Transverse colon (tissue), 4 donors: ENCODE measurements at regions of chr12 and their contacts with region 1.

Region 1: GRCh38 chr12:132373901-132374611 is 44.7 kb upstream of the GALNT9 start:
- DNase-seq: no peak
- H3K4me3 ChIP-seq: no peak overlapping the region
- H3K27ac ChIP-seq: no peak overlapping the region
- H3K4me1 ChIP-seq: no peaks in the 10 kb centered on the region
- H3K27me3 ChIP-seq: peaks cover 76% of the 10 kb centered on the region
- CTCF ChIP-seq: no peak
- EP300 ChIP-seq: no peak
- POLR2A ChIP-seq: no peak

Region 2: GRCh38 chr12:132153501-132154340 is 220.3 kb before region 1 on chr12:
- in situ Hi-C with region 1: no loop called
- intact Hi-C with region 1: loop called (anchors 10 kb)
- DNase-seq: peak; percentile 65
- H3K4me3 ChIP-seq: peak overlapping the region in 1 of 4 donors; percentile 29
- H3K27ac ChIP-seq: no peak overlapping the region
- H3K4me1 ChIP-seq: peaks cover 0 to 9% (median 7%) of the 10 kb centered on the region in 4 donors
- H3K27me3 ChIP-seq: no peaks in the 10 kb centered on the region
- CTCF ChIP-seq: peak; percentile 87 to 94 (median 90)
- EP300 ChIP-seq: no peak
- POLR2A ChIP-seq: no peak

Region 3: GRCh38 chr12:132205271-132206045 is 168.6 kb before region 1 on chr12:
- in situ Hi-C with region 1: no loop called
- intact Hi-C with region 1: no loop called
- DNase-seq: no peak
- H3K4me3 ChIP-seq: peak overlapping the region in 2 of 4 donors; percentile 10 to 12
- H3K27ac ChIP-seq: no peak overlapping the region
- H3K4me1 ChIP-seq: peaks cover 0 to 9% (median 4%) of the 10 kb centered on the region in 4 donors
- H3K27me3 ChIP-seq: peaks cover 48% of the 10 kb centered on the region
- CTCF ChIP-seq: no peak
- EP300 ChIP-seq: no peak
- POLR2A ChIP-seq: no peak

Region 4: GRCh38 chr12:132771126-132771838 is 397.2 kb after region 1 on chr12:
- in situ Hi-C with region 1: no loop called
- intact Hi-C with region 1: no loop called
- DNase-seq: peak; percentile 61
- H3K4me3 ChIP-seq: no peak overlapping the region
- H3K27ac ChIP-seq: peak overlapping the region; percentile 37 to 74 (median 54)
- H3K4me1 ChIP-seq: peaks cover 0 to 19% (median 8%) of the 10 kb centered on the region in 4 donors
- H3K27me3 ChIP-seq: no peaks in the 10 kb centered on the region
- CTCF ChIP-seq: no peak
- EP300 ChIP-seq: no peak
- POLR2A ChIP-seq: no peak